GM18951 (cell line): ENCODE measurements at regions of chr2 and their contacts with region 1.

Region 1: DNA sequence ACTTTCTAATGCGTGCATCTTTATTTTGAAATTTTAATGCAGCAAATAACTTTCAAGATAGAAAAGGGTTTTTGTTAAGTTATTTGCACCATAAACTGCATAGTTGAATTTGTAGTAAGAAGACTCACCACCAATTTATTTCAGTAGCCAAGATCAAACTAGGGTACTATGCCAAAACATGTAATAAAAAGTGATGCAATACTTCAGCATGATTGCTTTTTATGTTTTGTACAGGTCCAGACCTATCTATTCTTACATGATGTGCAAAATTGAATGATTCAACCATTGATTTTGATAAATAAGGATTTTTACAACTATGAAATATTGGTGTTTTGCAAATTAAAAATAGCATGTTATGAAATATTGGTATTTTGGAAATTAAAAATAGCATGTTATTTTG is 26.7 kb downstream of the AGPS start:
- POLR2A ChIP-seq: no peak

Region 2: GRCh38 chr2:177141866-177142265 is 277.4 kb before region 1 on chr2:
- in situ Hi-C with region 1: no loop called
- POLR2A ChIP-seq: no peak

Region 3: DNA sequence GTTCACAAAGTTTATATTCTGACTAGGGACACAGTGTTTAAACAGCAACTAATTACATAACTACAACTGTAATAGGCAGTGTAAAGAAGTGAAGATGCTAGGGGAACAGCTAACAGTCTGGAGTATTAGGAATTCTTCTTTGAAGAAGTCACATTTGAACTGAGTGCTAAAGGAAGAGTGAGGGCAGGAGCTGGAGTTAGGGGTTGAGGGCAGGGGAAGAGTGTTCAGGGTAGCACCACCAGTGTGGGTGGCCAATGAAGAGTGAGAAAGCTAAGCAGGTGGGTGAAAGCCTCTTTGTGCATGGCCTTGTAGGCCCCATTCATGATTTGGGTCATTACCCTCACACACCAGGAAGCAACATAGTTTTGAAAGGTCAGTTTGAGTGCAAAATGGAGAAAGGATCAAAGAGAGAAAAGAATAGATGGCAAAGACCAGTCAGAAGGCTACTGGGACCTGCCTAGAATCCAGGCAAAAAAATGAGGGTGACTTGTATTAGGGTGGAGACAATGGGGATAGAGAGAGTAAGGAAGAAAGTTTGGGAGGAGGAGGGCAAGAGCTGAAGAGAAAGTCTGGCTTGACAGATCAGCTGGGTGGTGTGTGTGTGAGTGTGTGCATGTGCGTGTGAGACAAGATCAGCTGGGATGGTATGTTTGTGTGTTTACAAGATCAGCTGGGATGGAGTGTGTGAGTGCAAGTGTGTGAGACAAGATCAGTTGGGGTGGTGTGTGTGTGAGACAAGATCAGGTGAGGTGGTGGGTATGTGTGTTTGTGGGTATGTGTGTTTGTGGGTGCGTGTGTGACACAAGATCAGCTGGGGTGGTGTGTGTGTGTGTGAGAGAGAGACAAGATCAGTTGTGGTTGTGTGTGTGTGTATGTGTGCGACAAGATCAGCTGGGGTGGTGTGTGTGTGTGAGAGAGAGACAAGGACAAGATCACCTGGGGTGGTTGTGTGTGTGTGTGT is 70.3 kb before region 1 on chr2:
- in situ Hi-C with region 1: loop called (anchors 10 kb)
- POLR2A ChIP-seq: no peak